Right cardiac atrium (tissue), 5 donors: ENCODE measurements at regions of chr6 and their contacts with region 1.

Region 1: GRCh38 chr6:11496152-11497060 is 41.1 kb upstream of the TMEM170B start:
- DNase-seq: peak; percentile 22 to 56 (median 31)
- ATAC-seq: peak; percentile 90 to 91
- H3K4me3 ChIP-seq: no peak overlapping the region
- H3K27ac ChIP-seq: no peak overlapping the region
- H3K4me1 ChIP-seq: peaks cover 4% of the 10 kb centered on the region
- H3K27me3 ChIP-seq: no peaks in the 10 kb centered on the region

Region 2: GRCh38 chr6:10567256-10568026 is 929.0 kb before region 1 on chr6:
- intact Hi-C with region 1: no loop called
- DNase-seq: no peak
- ATAC-seq: no peak
- H3K4me3 ChIP-seq: no peak overlapping the region
- H3K27ac ChIP-seq: no peak overlapping the region
- H3K4me1 ChIP-seq: no peaks in the 10 kb centered on the region
- H3K27me3 ChIP-seq: no peaks in the 10 kb centered on the region

Region 3: DNA sequence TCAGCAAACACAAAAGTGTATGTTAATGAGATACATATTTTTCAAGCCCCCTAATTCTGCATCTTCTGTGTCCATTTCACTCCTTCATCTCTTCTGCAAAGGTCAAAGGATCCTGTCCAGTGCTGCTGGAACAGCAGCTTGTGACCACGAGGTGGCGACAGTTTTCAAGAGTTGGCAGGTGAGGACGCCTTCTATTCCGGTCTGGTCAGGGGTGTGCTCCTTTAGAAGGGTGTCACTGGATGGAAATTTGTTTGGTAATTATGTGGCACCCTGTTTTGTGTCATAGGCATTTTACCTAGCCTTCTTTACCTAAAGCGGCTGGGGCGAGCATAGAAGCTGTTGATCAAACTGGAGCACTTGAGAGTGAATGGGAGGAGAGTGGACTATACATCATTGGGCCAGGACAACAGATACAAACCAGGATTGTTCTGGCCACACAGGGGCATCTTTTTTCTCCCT is 352.0 kb before region 1 on chr6:
- intact Hi-C with region 1: loop called (anchors 2 to 5 kb)
- DNase-seq: peak; percentile 76 to 92 (median 87)
- ATAC-seq: peak; percentile 91 to 92
- H3K4me3 ChIP-seq: no peak overlapping the region
- H3K27ac ChIP-seq: no peak overlapping the region
- H3K4me1 ChIP-seq: no peaks in the 10 kb centered on the region
- H3K27me3 ChIP-seq: no peaks in the 10 kb centered on the region

Region 4: DNA sequence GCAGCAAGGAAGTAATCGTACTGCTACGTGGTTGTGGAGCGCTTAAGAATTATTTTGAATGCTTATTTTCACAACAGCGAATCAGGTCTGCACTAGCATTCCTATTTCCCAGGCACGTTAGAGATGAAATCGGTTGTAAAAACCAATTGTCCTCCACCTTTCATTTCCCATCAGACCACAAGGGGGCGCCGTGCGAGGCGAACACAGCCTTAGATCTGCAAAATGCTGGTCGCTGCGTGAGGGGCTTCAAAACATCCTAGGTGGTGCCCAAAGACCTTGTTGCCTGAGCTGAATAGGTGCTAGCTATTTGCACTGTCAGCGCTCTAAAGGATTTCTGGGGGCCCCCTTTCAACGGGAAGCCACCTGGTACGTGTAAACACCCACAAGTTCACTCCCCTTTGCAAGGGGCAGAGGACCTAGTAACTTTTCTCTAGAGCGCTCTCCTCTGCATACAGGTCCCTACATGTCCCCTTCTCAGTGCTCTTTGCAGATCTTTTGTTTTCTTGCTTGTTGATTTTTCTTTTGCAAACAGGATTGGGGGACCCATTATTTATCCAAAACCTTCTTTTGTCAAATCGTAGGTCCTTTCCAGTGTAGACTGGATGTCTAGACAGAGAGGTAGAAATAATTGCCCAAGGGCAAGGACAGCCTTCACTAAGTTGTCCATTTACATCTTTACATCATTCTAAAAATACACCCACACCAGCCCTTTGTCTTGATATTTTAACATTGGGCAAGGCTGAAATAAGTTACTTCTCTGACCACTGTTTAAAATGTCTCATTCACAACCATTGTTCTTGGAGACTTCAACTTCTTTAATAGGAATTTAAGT is 323.7 kb before region 1 on chr6:
- intact Hi-C with region 1: loop called in 2 of 4 experiments (anchors 5 to 10 kb)
- DNase-seq: peak; percentile 65 to 87 (median 79)
- ATAC-seq: peak; percentile 51
- H3K4me3 ChIP-seq: no peak overlapping the region
- H3K27ac ChIP-seq: no peak overlapping the region
- H3K4me1 ChIP-seq: peaks cover 5% of the 10 kb centered on the region
- H3K27me3 ChIP-seq: no peaks in the 10 kb centered on the region

Region 5: DNA sequence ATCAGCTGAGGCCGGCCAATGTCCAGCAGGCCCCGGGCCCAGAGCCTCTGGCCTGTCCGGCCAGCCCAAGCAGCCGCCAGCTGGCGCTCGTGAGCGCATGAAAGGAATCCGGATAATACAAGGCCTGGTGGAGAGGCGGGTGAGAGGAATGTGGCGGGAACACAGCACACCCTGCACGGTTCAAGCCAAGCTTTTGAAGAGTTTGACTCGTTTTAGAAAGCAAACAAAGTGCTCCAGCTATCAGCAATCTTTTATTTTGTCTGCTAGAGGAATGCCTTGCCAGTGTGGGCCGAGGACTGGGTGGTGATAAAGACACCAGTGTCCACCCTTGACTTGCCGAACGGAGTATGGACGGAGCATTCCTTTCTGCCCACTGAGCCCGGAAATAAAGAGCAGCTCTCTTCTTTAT is 254.6 kb before region 1 on chr6:
- intact Hi-C with region 1: loop called in 3 of 4 experiments (anchors 10 kb)
- DNase-seq: peak; percentile 87 to 95 (median 92)
- ATAC-seq: peak; percentile 97 to 98
- H3K4me3 ChIP-seq: no peak overlapping the region
- H3K27ac ChIP-seq: no peak overlapping the region
- H3K4me1 ChIP-seq: peaks cover 3% of the 10 kb centered on the region
- H3K27me3 ChIP-seq: no peaks in the 10 kb centered on the region